ENCODE measurements at regions of chr9 and their contacts with region 1.

Region 1: GRCh38 chr9:134443168-134444037 is 117.1 kb downstream of the RXRA start:
- DNase-seq: peak; percentile 94
- H3K4me3 ChIP-seq: no peak overlapping the region
- H3K27ac ChIP-seq: no peak overlapping the region
- H3K4me1 ChIP-seq: peaks cover 12% of the 10 kb centered on the region
- H3K27me3 ChIP-seq: no peaks in the 10 kb centered on the region
- CTCF ChIP-seq: peak; percentile 83 to 97

Region 2: GRCh38 chr9:134128727-134129679 is 314.4 kb before region 1 on chr9:
- CTCF ChIA-PET with region 1: no interaction called
- dilution Hi-C with region 1: no loop called
- in situ Hi-C with region 1: no loop called
- intact Hi-C with region 1: no loop called
- DNase-seq: no peak
- H3K4me3 ChIP-seq: no peak overlapping the region
- H3K27ac ChIP-seq: no peak overlapping the region
- H3K4me1 ChIP-seq: peaks cover 6% of the 10 kb centered on the region
- H3K27me3 ChIP-seq: no peaks in the 10 kb centered on the region
- CTCF ChIP-seq: no peak

Region 3: DNA sequence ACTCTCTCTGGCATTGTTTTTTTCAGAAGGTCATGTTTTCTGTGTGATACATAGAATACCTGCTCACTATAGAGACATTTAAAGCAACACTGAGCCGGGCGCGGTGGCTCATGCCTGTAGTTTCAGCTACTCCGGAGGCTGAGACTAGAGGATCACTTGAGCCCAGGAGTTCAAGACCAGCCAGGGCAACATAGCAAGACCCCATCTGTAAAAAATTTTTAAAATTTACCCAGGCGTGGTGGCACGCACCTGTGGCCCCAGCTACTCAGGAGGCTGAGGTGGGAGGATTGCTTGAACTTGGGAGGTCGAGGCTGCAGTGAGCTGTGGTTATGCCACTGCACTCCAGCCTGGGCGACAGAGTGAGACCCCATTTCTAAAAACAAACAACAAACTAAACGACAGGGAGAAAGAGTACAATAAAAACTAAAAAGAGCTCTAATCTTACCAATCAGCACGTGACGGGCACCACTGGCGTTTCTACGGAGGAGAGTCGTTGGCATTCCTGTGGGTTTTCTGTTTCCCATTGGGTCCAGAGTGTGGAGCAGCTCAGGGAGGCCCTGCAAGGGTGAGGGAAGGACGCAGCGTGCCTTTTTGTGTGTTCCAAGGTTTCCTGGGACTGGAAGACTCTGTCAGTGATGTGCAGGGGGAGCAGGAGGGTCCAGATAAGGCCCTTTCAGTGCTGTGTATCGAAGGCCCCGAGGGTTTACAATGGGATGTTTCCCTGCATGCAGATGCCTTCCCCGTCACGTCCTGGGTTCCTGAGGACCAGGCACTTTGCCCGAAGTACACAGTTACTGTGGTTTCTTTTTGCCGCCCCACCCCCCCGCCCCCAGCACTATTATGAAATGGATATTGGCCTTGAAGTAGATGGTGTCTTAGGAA is 271.8 kb before region 1 on chr9:
- CTCF ChIA-PET with region 1: interaction called, 4 read pairs
- dilution Hi-C with region 1: no loop called
- in situ Hi-C with region 1: loop called (anchors 5 to 10 kb)
- intact Hi-C with region 1: loop called (anchors 1 kb)
- DNase-seq: peak; percentile 32
- H3K4me3 ChIP-seq: no peak overlapping the region
- H3K27ac ChIP-seq: no peak overlapping the region
- H3K4me1 ChIP-seq: peaks cover 10% of the 10 kb centered on the region
- H3K27me3 ChIP-seq: no peaks in the 10 kb centered on the region
- CTCF ChIP-seq: no peak

Region 4: DNA sequence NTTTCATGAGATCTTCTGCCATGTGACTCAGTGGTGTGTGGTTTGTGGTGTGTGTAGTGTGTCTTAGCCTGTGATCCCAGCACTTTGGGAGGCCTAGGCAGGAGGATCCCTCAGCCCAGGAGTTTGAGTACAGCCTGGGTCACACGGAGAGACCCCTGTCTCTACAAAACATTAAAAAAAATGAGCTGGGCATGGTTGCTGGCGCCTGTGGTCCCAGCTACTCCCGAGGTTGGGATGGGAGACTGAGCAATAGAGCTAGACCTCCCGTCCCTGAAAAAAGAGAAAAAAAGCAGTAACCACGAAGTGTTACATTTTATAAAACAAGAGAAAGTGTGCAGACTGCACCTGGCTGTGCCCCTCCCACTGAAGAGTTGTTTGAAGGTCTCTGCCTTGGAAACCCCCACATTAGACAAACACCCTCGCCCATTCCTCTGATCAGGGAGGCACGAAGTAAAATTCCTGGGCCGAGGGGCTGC is 257.8 kb before region 1 on chr9:
- CTCF ChIA-PET with region 1: no interaction called
- dilution Hi-C with region 1: loop called (anchors 5 kb)
- in situ Hi-C with region 1: no loop called
- intact Hi-C with region 1: no loop called
- DNase-seq: peak; percentile 22
- H3K4me3 ChIP-seq: no peak overlapping the region
- H3K27ac ChIP-seq: no peak overlapping the region
- H3K4me1 ChIP-seq: no peaks in the 10 kb centered on the region
- H3K27me3 ChIP-seq: peaks cover 7% of the 10 kb centered on the region
- CTCF ChIP-seq: no peak

Region 5: GRCh38 chr9:134316449-134317160 is 126.8 kb before region 1 on chr9:
- CTCF ChIA-PET with region 1: no interaction called
- dilution Hi-C with region 1: no loop called
- in situ Hi-C with region 1: no loop called
- intact Hi-C with region 1: no loop called
- DNase-seq: peak; percentile 19
- H3K4me3 ChIP-seq: no peak overlapping the region
- H3K27ac ChIP-seq: no peak overlapping the region
- H3K4me1 ChIP-seq: peaks cover 4% of the 10 kb centered on the region
- H3K27me3 ChIP-seq: no peaks in the 10 kb centered on the region
- CTCF ChIP-seq: no peak

Region 6: DNA sequence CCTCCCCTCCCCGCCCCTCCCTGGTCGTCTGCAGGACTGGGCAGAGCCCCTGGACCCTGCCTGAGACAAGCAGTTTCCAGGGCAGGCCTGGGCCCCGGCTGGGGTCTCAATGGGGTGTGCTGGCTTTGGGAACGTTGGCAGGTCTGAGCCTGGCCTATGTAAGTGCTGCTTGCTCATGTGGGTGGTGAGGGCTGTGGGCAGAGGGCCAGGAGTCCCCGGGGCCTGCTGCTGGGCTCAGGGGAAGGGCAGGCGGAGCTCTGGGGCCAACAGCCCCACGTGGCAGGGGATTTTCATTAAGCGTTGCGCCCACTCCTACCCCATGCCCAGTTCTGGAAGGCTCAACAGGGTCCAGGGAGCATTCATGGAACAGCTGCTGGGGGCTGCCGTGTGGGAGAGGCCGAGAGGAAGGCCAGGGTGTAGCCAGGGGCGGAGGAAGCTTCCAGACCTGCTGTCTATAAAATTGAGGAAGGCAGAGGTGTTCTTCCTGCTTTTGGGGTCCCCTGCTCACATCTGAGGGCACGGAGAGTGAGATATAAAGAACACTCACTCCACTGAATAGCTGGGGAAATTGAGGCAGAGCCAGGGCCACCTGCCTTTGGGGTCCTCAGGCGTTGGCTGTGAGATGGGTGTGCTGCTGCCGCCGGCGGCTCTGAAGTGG is 84.6 kb before region 1 on chr9:
- CTCF ChIA-PET with region 1: no interaction called
- dilution Hi-C with region 1: loop called (anchors 5 kb)
- in situ Hi-C with region 1: no loop called
- intact Hi-C with region 1: loop called (anchors 2 kb)
- DNase-seq: peak; percentile 66
- H3K4me3 ChIP-seq: no peak overlapping the region
- H3K27ac ChIP-seq: no peak overlapping the region
- H3K4me1 ChIP-seq: peaks cover 75% of the 10 kb centered on the region
- H3K27me3 ChIP-seq: no peaks in the 10 kb centered on the region
- CTCF ChIP-seq: no peak

Region 7: GRCh38 chr9:134381671-134382516 is 61.5 kb before region 1 on chr9:
- CTCF ChIA-PET with region 1: no interaction called
- dilution Hi-C with region 1: no loop called
- in situ Hi-C with region 1: no loop called
- intact Hi-C with region 1: loop called (anchors 5 kb)
- DNase-seq: no peak
- H3K4me3 ChIP-seq: no peak overlapping the region
- H3K27ac ChIP-seq: no peak overlapping the region
- H3K4me1 ChIP-seq: peaks cover 74% of the 10 kb centered on the region
- H3K27me3 ChIP-seq: no peaks in the 10 kb centered on the region
- CTCF ChIP-seq: peak in 1 of 2 donors; percentile 11

Region 8: GRCh38 chr9:134399435-134400056 is 43.9 kb before region 1 on chr9:
- CTCF ChIA-PET with region 1: no interaction called
- dilution Hi-C with region 1: no loop called
- in situ Hi-C with region 1: no loop called
- intact Hi-C with region 1: loop called (anchors 5 kb)
- DNase-seq: no peak
- H3K4me3 ChIP-seq: no peak overlapping the region
- H3K27ac ChIP-seq: no peak overlapping the region
- H3K4me1 ChIP-seq: peaks cover 25% of the 10 kb centered on the region
- H3K27me3 ChIP-seq: no peaks in the 10 kb centered on the region
- CTCF ChIP-seq: peak; percentile 63 to 83

Region 9: DNA sequence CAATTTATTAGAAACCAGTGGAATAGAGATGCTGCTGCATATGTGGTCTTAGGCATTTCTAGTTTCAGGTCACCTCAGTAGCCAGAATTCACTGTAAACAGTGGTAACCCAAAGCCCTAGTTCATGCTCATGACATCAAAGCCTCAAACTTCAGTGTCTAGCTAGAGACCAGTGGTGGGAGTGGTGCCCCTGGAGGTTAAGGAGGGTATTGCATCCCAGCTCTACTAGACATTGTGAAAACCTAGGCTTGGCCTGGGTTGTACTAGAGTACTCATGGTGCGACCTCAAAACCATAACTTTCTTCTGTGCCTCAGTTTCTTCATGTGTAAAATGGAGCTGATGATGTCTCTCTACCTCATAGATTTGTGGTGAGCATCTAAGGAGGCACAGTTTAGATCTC is 217.0 kb after region 1 on chr9:
- CTCF ChIA-PET with region 1: no interaction called
- dilution Hi-C with region 1: no loop called
- in situ Hi-C with region 1: no loop called
- intact Hi-C with region 1: no loop called
- DNase-seq: no peak
- H3K4me3 ChIP-seq: no peak overlapping the region
- H3K27ac ChIP-seq: no peak overlapping the region
- H3K4me1 ChIP-seq: no peaks in the 10 kb centered on the region
- H3K27me3 ChIP-seq: no peaks in the 10 kb centered on the region
- CTCF ChIP-seq: peak; percentile 31 to 40

Region 10: DNA sequence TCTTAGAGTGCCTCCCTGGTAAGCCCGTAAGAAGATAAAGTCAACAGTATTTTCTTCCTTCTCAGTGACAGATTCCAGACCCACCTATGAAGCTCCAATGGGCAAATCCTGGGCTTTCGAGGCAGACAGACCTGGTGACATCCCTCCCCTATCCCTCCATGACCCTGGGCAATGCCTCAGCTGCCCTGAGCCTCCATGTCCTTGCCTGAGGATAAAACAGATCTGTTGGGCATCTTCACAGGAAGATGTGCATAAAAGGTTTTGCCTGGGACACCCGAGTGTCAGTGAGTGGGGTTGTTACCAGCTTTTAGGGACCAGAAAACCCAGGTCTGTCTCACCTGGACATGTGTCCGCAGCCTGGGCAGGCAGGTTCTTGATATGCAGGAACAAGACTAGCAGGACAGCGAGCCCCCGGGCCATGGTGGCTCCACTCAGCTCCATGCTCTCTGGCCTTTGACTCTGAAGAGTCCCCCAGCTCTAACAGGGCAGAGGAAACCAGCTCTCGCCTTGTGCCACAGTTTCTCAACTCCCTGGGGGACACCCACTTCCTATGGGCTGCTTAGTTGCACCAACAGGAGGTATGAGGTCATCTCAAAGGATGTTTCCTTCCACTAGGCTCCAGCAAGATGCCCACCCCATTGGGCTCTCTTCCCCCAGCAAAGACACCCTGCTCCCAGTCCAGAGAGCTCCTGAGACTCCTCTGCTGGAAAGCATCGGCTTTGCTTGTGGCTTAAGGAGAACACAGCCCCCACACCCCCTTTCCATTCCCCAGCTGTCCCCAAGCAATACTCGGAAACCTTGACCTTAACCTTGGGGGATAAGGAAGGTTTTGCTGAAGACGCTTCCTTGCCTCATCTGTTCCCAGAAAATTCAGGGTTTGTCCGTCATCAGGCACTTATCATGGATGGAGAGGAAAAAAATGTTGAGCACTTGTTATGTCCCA is 474.3 kb after region 1 on chr9 and contains the start of gene FCN1:
- CTCF ChIA-PET with region 1: no interaction called
- dilution Hi-C with region 1: no loop called
- in situ Hi-C with region 1: no loop called
- intact Hi-C with region 1: no loop called
- DNase-seq: no peak
- H3K4me3 ChIP-seq: no peak within 1 kb of the TSS
- H3K27ac ChIP-seq: no peak within 1 kb of the TSS
- H3K4me1 ChIP-seq: no peaks in the 10 kb centered on the region
- H3K27me3 ChIP-seq: no peaks in the 10 kb centered on the region
- CTCF ChIP-seq: no peak
- total RNA-seq, gene FCN1: not detected

Measured in mammary epithelial cell (primary cell).